HCT116 (cell line): ENCODE measurements at regions of chr4 and their contacts with region 1.

Region 1: GRCh38 chr4:113106108-113106507 is 56.7 kb downstream of the ANK2 start:
- DNase-seq: peak; percentile 23
- ATAC-seq: peak; percentile 60; the same call in 1 of the 2 replicates
- H3K4me3 ChIP-seq: no peak overlapping the region
- H3K27ac ChIP-seq: no peak overlapping the region
- H3K4me1 ChIP-seq: no peaks in the 10 kb centered on the region
- H3K27me3 ChIP-seq: no peaks in the 10 kb centered on the region
- CTCF ChIP-seq: peak; percentile 38 to 57 (median 44); a peak in 5 of 6 replicates
- POLR2A ChIP-seq: no peak
- RAD21 ChIP-seq: peak; percentile 66

Region 2: DNA sequence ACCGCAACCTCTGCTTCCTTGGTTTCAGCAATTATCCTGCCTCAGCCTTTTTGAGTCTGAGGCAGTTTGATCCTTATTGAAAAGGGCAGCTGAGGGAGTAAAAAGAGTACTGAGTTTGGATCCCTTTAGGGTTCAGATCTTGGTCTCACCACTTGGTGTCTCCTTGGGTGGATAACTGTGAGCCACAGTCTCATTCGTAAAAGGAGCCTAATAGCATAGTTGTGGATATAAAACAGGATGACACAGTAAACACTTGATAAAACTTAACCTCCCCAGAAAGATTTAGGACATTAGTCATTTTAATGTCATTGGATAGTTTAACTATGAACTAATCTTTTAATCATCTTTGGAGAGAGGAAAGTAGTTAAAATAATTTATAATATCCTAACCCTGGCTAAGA is 116.4 kb after region 1 on chr4:
- CTCF ChIA-PET with region 1: no interaction called
- POLR2A ChIA-PET with region 1: no interaction called
- RAD21 ChIA-PET with region 1: no interaction called
- intact Hi-C with region 1: no loop called
- DNase-seq: no peak
- ATAC-seq: peak; percentile 52; the same call in 1 of the 2 replicates
- H3K4me3 ChIP-seq: no peak overlapping the region
- H3K27ac ChIP-seq: no peak overlapping the region
- H3K4me1 ChIP-seq: no peaks in the 10 kb centered on the region
- H3K27me3 ChIP-seq: no peaks in the 10 kb centered on the region
- CTCF ChIP-seq: no peak
- POLR2A ChIP-seq: no peak
- RAD21 ChIP-seq: no peak

Region 3: GRCh38 chr4:113248320-113248719 is 142.2 kb after region 1 on chr4:
- CTCF ChIA-PET with region 1: interaction called, 3 read pairs
- POLR2A ChIA-PET with region 1: no interaction called
- RAD21 ChIA-PET with region 1: no interaction called
- intact Hi-C with region 1: loop called (anchors 5 kb)
- DNase-seq: peak; percentile 4
- ATAC-seq: peak; percentile 73
- H3K4me3 ChIP-seq: no peak overlapping the region
- H3K27ac ChIP-seq: no peak overlapping the region
- H3K4me1 ChIP-seq: no peaks in the 10 kb centered on the region
- H3K27me3 ChIP-seq: no peaks in the 10 kb centered on the region
- CTCF ChIP-seq: peak in 2 of 3 experiments; percentile 47 to 64; a peak in 4 of 6 replicates
- POLR2A ChIP-seq: no peak
- RAD21 ChIP-seq: peak; percentile 49

Region 4: GRCh38 chr4:113383111-113383785 is 277.1 kb after region 1 on chr4:
- CTCF ChIA-PET with region 1: no interaction called
- POLR2A ChIA-PET with region 1: no interaction called
- RAD21 ChIA-PET with region 1: no interaction called
- intact Hi-C with region 1: loop called (anchors 10 kb)
- DNase-seq: peak; percentile 15
- ATAC-seq: no peak
- H3K4me3 ChIP-seq: no peak overlapping the region
- H3K27ac ChIP-seq: no peak overlapping the region
- H3K4me1 ChIP-seq: peaks cover 9 to 35% of the 10 kb centered on the region in 2 experiments
- H3K27me3 ChIP-seq: no peaks in the 10 kb centered on the region
- CTCF ChIP-seq: no peak
- POLR2A ChIP-seq: no peak
- RAD21 ChIP-seq: no peak